AG04449 (cell line): ENCODE measurements at regions of chr5 and their contacts with region 1.

Region 1: GRCh38 chr5:135457424-135458071 is 5.4 kb upstream of the TIFAB start:
- DNase-seq: no peak
- H3K4me3 ChIP-seq: no peak overlapping the region
- CTCF ChIP-seq: peak; percentile 87

Region 2: DNA sequence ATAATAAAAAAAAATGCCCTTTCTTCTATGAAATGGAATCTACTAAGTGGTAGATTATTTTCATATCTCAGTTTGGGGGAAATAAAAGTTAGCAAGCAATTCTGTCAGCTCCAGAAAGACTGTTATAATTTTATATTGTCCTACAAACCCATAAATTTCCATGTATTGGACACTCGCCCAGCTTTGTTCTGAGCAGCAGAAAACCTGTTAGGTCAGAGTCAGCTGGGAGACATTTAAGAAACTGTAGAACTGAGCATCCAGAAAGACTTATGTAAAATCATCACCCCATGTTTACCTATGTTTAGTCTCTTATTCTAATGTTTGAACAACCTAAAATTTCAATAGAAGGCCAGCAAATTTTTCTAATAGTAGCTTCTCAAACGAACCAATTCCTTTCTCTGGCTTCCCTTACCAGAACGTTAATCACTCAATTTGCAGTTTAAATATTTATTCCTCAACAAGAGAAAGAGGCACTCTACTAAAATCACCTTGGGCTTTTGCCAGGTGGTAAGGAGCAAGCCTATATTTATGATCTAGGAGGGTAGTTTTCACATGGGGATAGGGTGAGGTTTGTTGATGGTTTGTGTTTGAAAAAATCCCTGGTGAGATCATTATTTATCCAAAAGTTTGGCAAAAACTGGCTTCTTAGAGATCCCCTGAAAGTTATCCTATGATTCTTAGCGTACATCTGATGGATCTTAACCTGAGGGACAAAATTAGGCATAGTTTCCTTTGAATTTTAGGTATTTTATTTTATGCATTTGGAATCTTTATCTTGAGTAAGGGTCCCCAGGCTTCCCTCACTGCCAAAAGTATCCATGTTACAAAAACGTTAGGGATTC is 92.9 kb before region 1 on chr5:
- CTCF ChIA-PET with region 1: no interaction called
- POLR2A ChIA-PET with region 1: no interaction called
- DNase-seq: no peak
- H3K4me3 ChIP-seq: no peak overlapping the region
- CTCF ChIP-seq: no peak

Region 3: DNA sequence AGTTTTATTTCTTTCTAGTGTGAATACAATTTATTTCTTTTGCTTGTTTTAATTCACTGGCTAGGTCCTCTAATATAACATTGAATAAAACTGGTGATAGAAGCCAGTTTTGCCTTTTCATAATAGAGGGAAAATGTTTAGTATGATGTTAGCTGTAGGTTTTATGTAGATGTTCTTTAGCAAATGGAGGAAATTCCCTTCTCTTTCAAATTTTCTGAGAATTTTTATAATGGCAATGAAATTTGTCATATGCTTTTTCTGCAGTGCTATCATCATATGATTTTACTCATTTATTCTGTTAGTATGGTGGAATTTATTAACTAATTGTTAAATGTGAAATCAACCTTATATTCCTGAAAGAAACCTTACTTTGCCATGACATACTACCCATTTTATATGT is 40.5 kb before region 1 on chr5:
- CTCF ChIA-PET with region 1: no interaction called
- POLR2A ChIA-PET with region 1: no interaction called
- DNase-seq: no peak
- H3K4me3 ChIP-seq: no peak overlapping the region
- CTCF ChIP-seq: no peak

Region 4: GRCh38 chr5:135443161-135443960 is 14.2 kb before region 1 on chr5:
- CTCF ChIA-PET with region 1: interaction called, 121 read pairs
- POLR2A ChIA-PET with region 1: no interaction called
- DNase-seq: no peak
- H3K4me3 ChIP-seq: no peak overlapping the region
- CTCF ChIP-seq: no peak

Region 5: GRCh38 chr5:135482381-135482933 is 24.9 kb after region 1 on chr5:
- CTCF ChIA-PET with region 1: interaction called, 114 read pairs
- POLR2A ChIA-PET with region 1: no interaction called
- DNase-seq: no peak
- H3K4me3 ChIP-seq: no peak overlapping the region
- CTCF ChIP-seq: no peak

Region 6: DNA sequence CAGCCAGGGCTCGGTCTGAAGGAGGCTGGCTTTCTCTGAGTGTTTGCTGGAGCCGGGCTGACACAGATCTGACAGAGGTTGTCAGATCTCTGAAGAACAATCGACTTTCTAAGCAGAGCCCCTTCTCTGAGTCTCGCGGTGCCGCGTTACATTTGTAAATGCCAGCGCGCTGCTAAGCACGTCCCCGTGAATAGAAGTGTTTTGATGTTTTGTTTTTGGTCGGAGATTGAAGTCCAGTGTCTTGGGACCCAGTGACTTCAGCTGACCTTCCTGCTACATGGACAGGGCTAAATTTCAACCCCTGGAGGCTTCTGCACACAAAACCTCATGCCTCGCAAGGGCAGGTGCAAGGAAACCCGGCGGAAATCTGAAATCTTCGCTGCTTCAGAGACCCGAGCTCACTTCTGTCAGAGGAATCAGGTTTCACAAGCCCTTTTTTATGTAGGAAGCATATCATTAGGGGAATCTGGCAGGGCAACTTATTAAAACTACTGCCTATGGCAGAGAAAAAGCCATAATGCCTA is 51.0 kb after region 1 on chr5:
- CTCF ChIA-PET with region 1: interaction called, 10 read pairs
- POLR2A ChIA-PET with region 1: no interaction called
- DNase-seq: no peak
- H3K4me3 ChIP-seq: no peak overlapping the region
- CTCF ChIP-seq: no peak